Dorsolateral prefrontal cortex (tissue), 120 donors: ENCODE measurements at regions of chr3 and their contacts with region 1.

Region 1: DNA sequence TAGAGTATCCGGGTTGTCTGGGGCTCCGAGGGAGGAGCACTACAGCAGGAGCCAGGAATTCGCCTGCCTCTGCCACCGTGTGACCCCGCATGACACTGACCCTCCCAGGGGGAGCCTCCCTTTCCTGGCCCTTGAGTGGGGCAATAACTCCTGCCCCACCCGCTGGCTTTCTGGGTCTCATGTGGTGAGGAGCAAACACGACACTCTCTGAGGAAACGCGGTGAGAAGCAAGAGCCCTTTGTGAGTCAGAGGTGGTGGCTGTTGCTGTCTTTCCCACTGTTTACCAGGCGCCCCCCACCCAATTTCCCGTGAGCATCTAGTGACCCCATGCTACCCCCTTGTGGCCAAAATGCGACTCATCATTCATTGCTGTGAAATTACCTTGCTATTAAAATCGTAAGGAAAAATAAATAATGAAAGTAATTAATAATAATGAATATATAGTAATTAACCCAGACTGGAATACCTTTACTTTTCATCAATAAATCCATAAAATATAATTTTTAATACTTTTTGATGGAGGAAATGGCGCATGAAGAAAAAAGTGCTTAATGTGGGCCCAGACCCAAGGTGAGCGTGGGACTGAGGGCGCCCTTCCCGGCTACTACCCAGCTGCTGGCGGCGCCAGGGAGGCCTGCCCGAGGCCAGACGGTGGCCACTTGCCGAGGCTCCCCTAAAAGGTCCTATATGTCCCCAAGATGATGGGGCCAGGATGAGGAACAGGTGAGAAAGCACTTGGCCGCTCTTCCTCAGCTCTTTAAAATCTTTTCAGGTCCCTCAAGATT is 29.3 kb downstream of the CCNL1 start:
- DNase-seq: peak in 6 of 10 donors; percentile 20 to 59 (median 44)
- H3K4me3 ChIP-seq: peak overlapping the region in 52 of 59 donors; percentile 7 to 57 (median 35)
- H3K27ac ChIP-seq: peak overlapping the region; percentile 79 to 100 (median 96)
- H3K27me3 ChIP-seq: no peaks in the 10 kb centered on the region
- CTCF ChIP-seq: peak; percentile 51 to 84 (median 72)

Region 2: GRCh38 chr3:156017352-156018030 is 1113.2 kb before region 1 on chr3:
- intact Hi-C with region 1: loop called in 1 of 2 experiments (anchors 10 kb)
- DNase-seq: no peak
- H3K4me3 ChIP-seq: no peak overlapping the region
- H3K27ac ChIP-seq: peak overlapping the region in 23 of 59 donors; percentile 0 to 57 (median 35)
- H3K27me3 ChIP-seq: no peaks in the 10 kb centered on the region
- CTCF ChIP-seq: no peak

Region 3: DNA sequence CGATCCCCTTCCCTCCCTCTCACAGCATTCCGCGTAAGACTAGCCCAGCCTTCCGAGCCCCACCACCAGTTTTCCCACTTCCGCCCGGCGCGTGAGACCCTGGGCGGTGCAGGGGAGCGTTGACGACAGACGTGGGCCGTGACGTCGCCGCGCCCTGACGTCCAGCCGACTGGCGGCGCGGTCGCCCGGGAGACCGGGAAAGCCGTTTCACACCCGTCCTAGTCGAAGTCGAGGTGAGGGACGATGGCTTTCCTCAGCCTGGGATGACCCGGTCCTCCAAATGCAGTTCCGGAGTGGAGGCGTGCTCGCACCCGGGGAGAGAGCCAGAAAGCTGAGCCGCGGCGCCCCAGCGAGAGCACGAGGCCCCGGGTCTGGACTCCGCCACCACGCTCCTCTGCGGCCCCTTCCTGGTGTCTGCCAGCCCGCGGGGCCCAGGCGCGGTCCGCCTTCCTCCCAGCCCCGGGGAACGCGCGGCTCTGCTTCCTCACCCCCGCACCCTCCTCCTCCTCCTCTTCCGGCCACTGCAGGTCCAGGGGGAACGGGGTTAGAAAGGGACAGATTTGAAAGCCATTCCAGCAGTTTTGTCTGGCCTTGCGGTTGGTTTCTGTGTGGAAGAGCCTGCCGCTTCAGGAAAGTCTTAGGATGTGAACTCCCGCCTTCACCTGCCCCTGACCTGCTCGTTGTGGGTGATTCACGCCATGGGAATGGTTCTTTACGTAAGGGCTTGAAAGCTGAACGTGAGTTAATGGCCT is 304.3 kb before region 1 on chr3 and contains the start of gene LEKR1:
- intact Hi-C with region 1: loop called in 1 of 2 experiments (anchors 10 kb)
- DNase-seq: peak; percentile 55 to 88 (median 80)
- H3K4me3 ChIP-seq: peak within 1 kb of the TSS; percentile 55 to 93 (median 78)
- H3K27ac ChIP-seq: peak within 1 kb of the TSS; percentile 30 to 94 (median 83)
- H3K27me3 ChIP-seq: no peaks in the 10 kb centered on the region
- CTCF ChIP-seq: peak in 19 of 56 donors; percentile 6 to 34 (median 16)
- total RNA-seq, gene LEKR1: 0.25 to 7.8 (median 1.3) TPM in 114 of 120 experiments, not detected in the others

Region 4: DNA sequence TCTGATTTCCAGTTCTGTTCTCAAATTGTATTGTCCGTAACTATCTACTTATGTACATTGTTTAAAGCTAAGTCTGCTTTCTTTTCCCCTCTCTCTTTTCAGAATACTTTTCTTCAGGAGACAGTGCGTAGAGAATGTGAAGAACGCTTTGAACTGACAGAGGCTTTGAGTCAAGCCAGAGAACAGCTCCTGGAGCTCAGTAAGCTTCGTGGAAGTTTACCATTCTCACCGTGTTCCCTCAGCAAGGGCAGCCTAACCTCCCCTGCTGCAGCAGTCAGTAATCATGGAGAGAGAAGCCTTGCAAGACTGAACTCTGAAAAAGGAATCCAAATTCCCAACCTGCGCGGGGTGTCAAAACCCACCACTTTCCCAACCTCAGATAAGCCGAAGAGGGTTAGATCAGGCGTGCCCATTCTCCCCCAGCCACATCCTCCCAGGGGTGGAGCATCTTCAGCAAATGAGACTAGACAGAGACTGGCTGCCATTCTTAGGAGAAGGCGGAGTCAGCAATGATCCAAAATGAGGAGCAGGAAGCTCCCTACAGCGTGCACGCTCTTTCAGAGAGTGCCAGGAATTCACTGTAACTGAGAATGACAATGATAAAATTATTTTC is 85.3 kb before region 1 on chr3:
- intact Hi-C with region 1: no loop called
- DNase-seq: no peak
- H3K4me3 ChIP-seq: no peak overlapping the region
- H3K27ac ChIP-seq: no peak overlapping the region
- H3K27me3 ChIP-seq: no peaks in the 10 kb centered on the region
- CTCF ChIP-seq: no peak

Region 5: GRCh38 chr3:157088601-157089454 is 41.8 kb before region 1 on chr3:
- intact Hi-C with region 1: loop called (anchors 2 kb)
- DNase-seq: peak; percentile 90 to 97 (median 94)
- H3K4me3 ChIP-seq: peak overlapping the region; percentile 49 to 91 (median 74)
- H3K27ac ChIP-seq: peak overlapping the region; percentile 95 to 100 (median 100)
- H3K27me3 ChIP-seq: no peaks in the 10 kb centered on the region
- CTCF ChIP-seq: peak in 45 of 56 donors; percentile 12 to 59 (median 38)